ENCODE measurements at regions of chr11 and their contacts with region 1.

Region 1: DNA sequence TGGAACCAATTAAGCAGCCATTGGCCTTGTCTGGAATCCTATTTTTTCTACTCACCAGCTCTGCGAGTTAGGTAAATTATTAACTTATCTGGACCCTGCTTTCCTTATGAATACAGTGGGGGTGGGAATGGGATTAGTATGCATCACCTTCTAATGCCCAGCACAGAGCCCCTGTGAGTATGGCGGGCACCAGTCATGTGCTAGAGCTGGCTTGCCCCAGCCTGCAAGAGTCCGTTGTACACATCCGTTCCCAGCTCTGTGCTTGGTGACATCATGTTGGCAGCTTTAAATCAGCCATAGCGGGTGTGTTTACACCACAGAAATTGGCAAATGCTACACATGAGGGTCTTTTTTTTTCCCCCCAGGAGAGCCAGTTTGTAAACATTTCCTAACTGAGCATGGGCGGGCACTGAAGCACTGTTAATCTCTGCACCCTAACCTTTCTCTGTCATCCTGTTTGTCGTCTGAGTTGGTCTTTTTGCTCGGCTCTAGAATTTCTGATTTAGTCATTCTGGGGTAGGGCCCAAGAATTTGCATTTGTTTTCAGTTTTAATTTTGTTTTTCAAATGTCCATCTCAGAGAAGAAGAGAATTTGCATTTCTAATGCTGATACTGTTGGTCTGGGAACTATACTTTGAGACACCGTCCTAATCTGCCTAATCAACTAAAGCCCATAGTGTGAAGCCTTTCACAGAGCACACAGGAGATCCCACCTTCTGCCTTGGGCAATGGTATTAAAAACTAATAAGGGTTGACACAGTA is 130.3 kb upstream of the TBCEL start:
- DNase-seq: no peak

Region 2: DNA sequence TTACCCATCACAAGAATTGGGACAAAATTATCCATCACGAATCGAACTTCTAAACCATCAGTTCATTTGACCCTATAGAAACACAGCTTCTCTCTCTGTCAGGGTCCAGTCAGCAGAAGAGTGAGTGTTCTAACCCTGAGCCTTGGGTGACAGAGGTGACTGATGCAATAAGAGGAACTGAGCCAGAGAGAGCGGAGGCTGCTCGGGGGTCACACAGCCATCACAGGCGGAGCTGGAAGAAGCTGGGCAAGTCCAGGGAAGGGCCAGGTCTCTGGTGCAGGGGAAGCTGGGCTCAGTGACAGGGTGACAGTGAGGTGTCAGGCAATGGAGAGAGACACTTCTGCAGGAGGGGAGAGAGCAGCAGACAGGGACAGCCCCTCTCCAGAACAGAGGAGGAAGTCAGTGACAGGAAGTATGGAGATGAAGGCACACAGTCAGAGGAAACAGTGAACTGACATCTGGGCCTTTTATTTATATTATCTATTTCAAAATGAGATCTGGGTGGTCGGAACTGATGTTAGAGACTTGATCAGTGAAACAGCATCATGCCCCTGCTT is 53.7 kb before region 1 on chr11:
- intact Hi-C with region 1: no loop called
- DNase-seq: no peak

Region 3: GRCh38 chr11:120940160-120940848 is 46.7 kb after region 1 on chr11:
- intact Hi-C with region 1: loop called in 1 of 2 experiments (anchors 2 kb)
- DNase-seq: peak; percentile 9

Measured in posterior vena cava (tissue), 2 donors.